ENCODE measurements at regions of chrX and their contacts with region 1.

Region 1: GRCh38 chrX:104482757-104483156 is 83.2 kb upstream of the IL1RAPL2 start:
- DNase-seq: no peak
- ATAC-seq: no peak
- H3K4me3 ChIP-seq: no peak overlapping the region
- H3K27ac ChIP-seq: no peak overlapping the region
- H3K4me1 ChIP-seq: no peaks in the 10 kb centered on the region
- H3K27me3 ChIP-seq: 0 out of 2 replicates have a peak, but pooled peaks cover 3% of the 10 kb centered on the region
- CTCF ChIP-seq: peak; percentile 15 to 40 (median 40); a peak in 5 of 6 replicates
- POLR2A ChIP-seq: no peak
- RAD21 ChIP-seq: peak; percentile 23; the same call in 1 of the 2 replicates

Region 2: GRCh38 chrX:104172121-104172520 is 310.6 kb before region 1 on chrX:
- CTCF ChIA-PET with region 1: no interaction called
- POLR2A ChIA-PET with region 1: no interaction called
- RAD21 ChIA-PET with region 1: no interaction called
- intact Hi-C with region 1: no loop called
- DNase-seq: no peak
- ATAC-seq: no peak
- H3K4me3 ChIP-seq: no peak overlapping the region
- H3K27ac ChIP-seq: no peak overlapping the region
- H3K4me1 ChIP-seq: peaks cover 0 to 8% of the 10 kb centered on the region in 2 experiments; a peak in 1 of 4 replicates
- H3K27me3 ChIP-seq: no peaks in the 10 kb centered on the region
- CTCF ChIP-seq: no peak
- POLR2A ChIP-seq: no peak
- RAD21 ChIP-seq: no peak

Region 3: DNA sequence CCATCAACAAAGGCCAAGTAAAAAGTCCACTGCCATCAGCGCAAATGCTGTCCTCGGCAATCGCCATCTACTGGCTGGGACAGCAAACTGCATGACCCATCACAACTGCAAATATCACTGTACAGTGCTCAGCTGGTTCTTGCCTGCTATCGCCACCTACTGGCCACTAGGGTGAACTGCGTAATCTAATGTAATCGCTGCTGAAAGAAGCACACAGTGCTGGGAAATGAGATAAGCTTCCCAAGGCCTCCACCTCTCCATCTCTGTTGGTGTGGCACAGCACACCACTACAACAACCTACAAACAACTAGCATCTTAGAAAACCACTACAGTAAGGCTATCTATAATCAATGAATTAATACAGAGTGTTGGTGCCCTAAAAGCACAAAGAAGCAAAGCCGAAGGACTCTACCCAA is 439.5 kb after region 1 on chrX:
- CTCF ChIA-PET with region 1: interaction called, 3 read pairs
- POLR2A ChIA-PET with region 1: no interaction called
- RAD21 ChIA-PET with region 1: no interaction called
- intact Hi-C with region 1: loop called (anchors 5 kb)
- DNase-seq: peak; percentile 36
- ATAC-seq: peak; percentile 90
- H3K4me3 ChIP-seq: no peak overlapping the region
- H3K27ac ChIP-seq: no peak overlapping the region
- H3K4me1 ChIP-seq: no peaks in the 10 kb centered on the region
- H3K27me3 ChIP-seq: no peaks in the 10 kb centered on the region
- CTCF ChIP-seq: peak; percentile 89 to 94 (median 90)
- POLR2A ChIP-seq: no peak
- RAD21 ChIP-seq: peak; percentile 57